Natural killer cell (primary cell): ENCODE measurements at regions of chr2 and their contacts with region 1.

Region 1: GRCh38 chr2:88190808-88191721 is 20.9 kb downstream of the THNSL2 start:
- DNase-seq: peak in 1 of 2 donors; percentile 55
- ATAC-seq: peak in 2 of 3 donors; percentile 38 to 58
- H3K4me3 ChIP-seq: no peak overlapping the region
- H3K4me3 Mint-ChIP-seq: no peak overlapping the region
- H3K27ac ChIP-seq: no peak overlapping the region
- H3K27ac Mint-ChIP-seq: no peak overlapping the region
- H3K4me1 ChIP-seq: no peaks in the 10 kb centered on the region
- H3K4me1 Mint-ChIP-seq: peaks cover 0 to 9% of the 10 kb centered on the region in 2 donors
- H3K27me3 ChIP-seq: no peaks in the 10 kb centered on the region
- H3K27me3 Mint-ChIP-seq: peaks cover 0 to 4% of the 10 kb centered on the region in 2 donors
- CTCF ChIP-seq: peak; percentile 50

Region 2: DNA sequence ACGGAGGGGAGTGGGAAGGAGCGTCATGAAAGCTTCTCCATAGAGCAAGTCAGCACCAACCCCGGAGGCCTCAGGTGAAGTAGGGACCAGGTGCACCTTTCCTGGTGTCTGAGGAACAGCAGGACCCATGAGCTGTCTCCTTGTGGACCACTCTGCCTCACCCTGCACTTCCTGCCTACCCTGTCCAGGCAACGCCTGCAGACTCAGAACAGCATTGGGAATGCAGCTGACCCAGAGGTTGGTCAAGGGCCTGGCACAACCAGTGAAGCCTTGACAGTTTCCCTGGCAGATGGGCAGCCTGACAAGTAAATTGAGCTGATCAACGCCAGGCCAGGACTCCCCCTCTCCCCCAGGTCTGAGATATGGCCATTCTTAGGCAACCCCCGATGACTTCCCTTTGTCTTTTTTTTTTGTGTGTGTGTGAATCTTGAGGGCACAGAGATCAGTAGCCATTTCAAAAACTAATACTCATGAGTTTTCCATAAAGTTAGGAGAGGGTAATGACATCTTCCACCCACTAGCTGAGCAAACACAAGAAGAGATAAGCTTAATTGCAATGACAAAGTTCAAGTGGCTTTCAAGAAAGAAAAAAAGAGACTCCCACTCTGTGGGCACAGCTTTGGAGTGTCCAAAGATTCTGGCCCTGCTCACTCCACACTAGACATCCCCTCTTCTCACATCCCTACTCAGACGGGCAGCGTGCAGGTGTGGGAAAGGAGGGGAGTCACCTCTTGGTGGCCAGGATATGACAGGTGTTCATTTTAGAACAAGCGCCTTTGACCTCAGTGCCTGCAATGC is 59.7 kb before region 1 on chr2:
- intact Hi-C with region 1: no loop called
- DNase-seq: no peak
- ATAC-seq: no peak
- H3K4me3 ChIP-seq: no peak overlapping the region
- H3K4me3 Mint-ChIP-seq: no peak overlapping the region
- H3K27ac ChIP-seq: no peak overlapping the region
- H3K27ac Mint-ChIP-seq: no peak overlapping the region
- H3K4me1 ChIP-seq: no peaks in the 10 kb centered on the region
- H3K4me1 Mint-ChIP-seq: no peaks in the 10 kb centered on the region
- H3K27me3 ChIP-seq: no peaks in the 10 kb centered on the region
- H3K27me3 Mint-ChIP-seq: peaks cover 12 to 41% of the 10 kb centered on the region in 2 donors
- CTCF ChIP-seq: no peak

Region 3: DNA sequence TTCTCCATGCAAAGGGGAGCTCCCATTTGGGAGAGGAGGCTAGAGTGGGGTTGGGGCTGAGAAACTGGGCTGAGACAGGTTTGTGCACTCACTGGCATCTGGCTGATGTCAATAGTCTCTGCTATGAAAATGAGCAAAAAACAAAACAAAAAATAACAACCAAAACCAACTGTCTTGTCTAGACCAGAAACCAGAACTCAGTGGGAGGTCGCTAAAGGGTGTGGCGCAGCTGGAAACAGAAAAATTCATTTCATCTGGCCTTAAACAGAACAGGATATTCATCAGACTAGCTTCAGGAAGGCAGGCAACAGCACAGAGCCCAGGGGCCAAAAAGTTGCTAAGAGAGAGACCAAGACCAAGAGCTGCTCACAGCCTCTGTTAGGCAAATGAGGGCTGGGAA is 105.2 kb after region 1 on chr2:
- intact Hi-C with region 1: no loop called
- DNase-seq: no peak
- ATAC-seq: no peak
- H3K4me3 ChIP-seq: no peak overlapping the region
- H3K4me3 Mint-ChIP-seq: no peak overlapping the region
- H3K27ac ChIP-seq: no peak overlapping the region
- H3K27ac Mint-ChIP-seq: no peak overlapping the region
- H3K4me1 ChIP-seq: no peaks in the 10 kb centered on the region
- H3K4me1 Mint-ChIP-seq: no peaks in the 10 kb centered on the region
- H3K27me3 ChIP-seq: no peaks in the 10 kb centered on the region
- H3K27me3 Mint-ChIP-seq: peaks cover 3 to 17% of the 10 kb centered on the region in 2 donors
- CTCF ChIP-seq: no peak

Region 4: GRCh38 chr2:88307817-88308216 is 116.8 kb after region 1 on chr2:
- intact Hi-C with region 1: loop called (anchors 5 kb)
- DNase-seq: peak in 1 of 2 donors; percentile 55
- ATAC-seq: peak in 1 of 3 donors; percentile 57
- H3K4me3 ChIP-seq: no peak overlapping the region
- H3K4me3 Mint-ChIP-seq: no peak overlapping the region
- H3K27ac ChIP-seq: no peak overlapping the region
- H3K27ac Mint-ChIP-seq: no peak overlapping the region
- H3K4me1 ChIP-seq: no peaks in the 10 kb centered on the region
- H3K4me1 Mint-ChIP-seq: no peaks in the 10 kb centered on the region
- H3K27me3 ChIP-seq: no peaks in the 10 kb centered on the region
- H3K27me3 Mint-ChIP-seq: peaks cover 7 to 14% of the 10 kb centered on the region in 2 donors
- CTCF ChIP-seq: peak; percentile 28